Naive thymus-derived CD4-positive, alpha-beta T cell (primary cell): ENCODE measurements at regions of chr10 and their contacts with region 1.

Region 1: DNA sequence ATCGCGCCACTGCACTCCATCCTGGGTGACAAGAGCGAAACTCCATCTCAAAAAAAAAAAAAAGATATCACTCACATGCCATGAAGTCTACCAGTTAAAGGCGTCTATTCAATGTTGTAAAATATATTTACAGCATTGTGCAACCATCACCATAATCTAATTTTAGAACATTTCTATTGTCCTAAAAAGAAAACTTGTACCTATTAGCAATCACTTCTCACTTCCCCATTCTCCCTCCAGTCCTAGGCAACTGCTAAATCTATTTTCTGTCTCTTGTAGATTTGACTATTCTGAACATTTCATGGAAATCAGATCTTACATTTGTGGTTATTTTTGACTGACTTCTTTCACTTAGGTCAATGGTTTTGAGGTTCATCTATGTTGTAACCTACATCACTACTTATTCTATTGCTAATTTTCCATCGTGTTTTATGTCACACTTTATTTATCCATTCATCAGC is 25.2 kb upstream of the OTUD1 start:
- DNase-seq: no peak
- ATAC-seq: peak; percentile 70
- H3K4me3 ChIP-seq: no peak overlapping the region
- H3K4me3 Mint-ChIP-seq: no peak overlapping the region
- H3K27ac ChIP-seq: no peak overlapping the region
- H3K27ac Mint-ChIP-seq: no peak overlapping the region
- H3K4me1 ChIP-seq: no peaks in the 10 kb centered on the region
- H3K4me1 Mint-ChIP-seq: peaks cover 0 to 8% (median 0%) of the 10 kb centered on the region in 7 donors
- H3K27me3 ChIP-seq: no peaks in the 10 kb centered on the region
- H3K27me3 Mint-ChIP-seq: peaks cover 0 to 11% (median 0%) of the 10 kb centered on the region in 5 donors

Region 2: DNA sequence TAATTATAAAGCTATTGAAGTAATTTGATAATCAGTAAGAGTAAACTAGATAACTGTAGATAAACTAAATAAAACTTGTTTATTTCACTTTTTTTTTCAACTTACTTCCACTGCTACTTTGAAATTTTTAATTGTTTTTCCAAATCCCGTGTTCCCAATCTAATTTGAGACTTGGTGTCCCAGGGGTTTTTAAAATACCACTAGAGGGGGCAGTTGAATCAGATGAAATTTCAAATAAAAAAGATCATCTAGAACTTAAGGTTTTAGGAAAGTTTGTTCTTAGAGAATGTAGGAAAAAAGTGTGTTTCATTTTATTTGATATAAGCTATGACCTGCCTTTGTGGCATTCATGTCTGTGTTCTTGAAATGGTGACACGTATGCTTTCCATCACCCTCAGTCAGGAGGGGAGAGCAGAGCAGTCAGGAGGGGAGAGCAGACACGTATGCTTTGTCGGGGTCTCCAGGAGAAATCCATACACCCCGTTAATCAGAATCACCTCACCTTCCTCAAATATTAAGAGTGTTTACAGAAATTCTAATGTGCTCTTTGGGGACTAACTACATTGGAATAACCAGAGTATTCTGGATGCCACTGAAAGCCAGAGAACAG is 118.9 kb before region 1 on chr10:
- CTCF ChIA-PET with region 1: no interaction called
- POLR2A ChIA-PET with region 1: no interaction called
- intact Hi-C with region 1: no loop called
- DNase-seq: no peak
- ATAC-seq: no peak
- H3K4me3 ChIP-seq: no peak overlapping the region
- H3K4me3 Mint-ChIP-seq: no peak overlapping the region
- H3K27ac ChIP-seq: no peak overlapping the region
- H3K27ac Mint-ChIP-seq: no peak overlapping the region
- H3K4me1 ChIP-seq: no peaks in the 10 kb centered on the region
- H3K4me1 Mint-ChIP-seq: peaks cover 0 to 2% (median 0%) of the 10 kb centered on the region in 7 donors
- H3K27me3 ChIP-seq: peaks cover 0 to 6% of the 10 kb centered on the region in 2 donors
- H3K27me3 Mint-ChIP-seq: peaks cover 16 to 32% (median 20%) of the 10 kb centered on the region in 5 donors

Region 3: GRCh38 chr10:23376229-23376655 is 37.4 kb before region 1 on chr10:
- CTCF ChIA-PET with region 1: no interaction called
- POLR2A ChIA-PET with region 1: no interaction called
- intact Hi-C with region 1: loop called in 1 of 2 experiments (anchors 5 kb)
- DNase-seq: no peak
- ATAC-seq: peak; percentile 46
- H3K4me3 ChIP-seq: no peak overlapping the region
- H3K4me3 Mint-ChIP-seq: no peak overlapping the region
- H3K27ac ChIP-seq: no peak overlapping the region
- H3K27ac Mint-ChIP-seq: no peak overlapping the region
- H3K4me1 ChIP-seq: no peaks in the 10 kb centered on the region
- H3K4me1 Mint-ChIP-seq: peaks cover 0 to 31% (median 1%) of the 10 kb centered on the region in 7 donors
- H3K27me3 ChIP-seq: no peaks in the 10 kb centered on the region
- H3K27me3 Mint-ChIP-seq: peaks cover 0 to 1% (median 0%) of the 10 kb centered on the region in 5 donors